ENCODE measurements at regions of chr12 and their contacts with region 1.

Region 1: GRCh38 chr12:93894391-93895088 is 217.4 kb downstream of the CRADD start:
- DNase-seq: no peak
- H3K4me3 Mint-ChIP-seq: no peak overlapping the region
- H3K27ac Mint-ChIP-seq: no peak overlapping the region
- H3K4me1 Mint-ChIP-seq: peaks cover 34% of the 10 kb centered on the region
- H3K27me3 Mint-ChIP-seq: peaks cover 1% of the 10 kb centered on the region

Region 2: DNA sequence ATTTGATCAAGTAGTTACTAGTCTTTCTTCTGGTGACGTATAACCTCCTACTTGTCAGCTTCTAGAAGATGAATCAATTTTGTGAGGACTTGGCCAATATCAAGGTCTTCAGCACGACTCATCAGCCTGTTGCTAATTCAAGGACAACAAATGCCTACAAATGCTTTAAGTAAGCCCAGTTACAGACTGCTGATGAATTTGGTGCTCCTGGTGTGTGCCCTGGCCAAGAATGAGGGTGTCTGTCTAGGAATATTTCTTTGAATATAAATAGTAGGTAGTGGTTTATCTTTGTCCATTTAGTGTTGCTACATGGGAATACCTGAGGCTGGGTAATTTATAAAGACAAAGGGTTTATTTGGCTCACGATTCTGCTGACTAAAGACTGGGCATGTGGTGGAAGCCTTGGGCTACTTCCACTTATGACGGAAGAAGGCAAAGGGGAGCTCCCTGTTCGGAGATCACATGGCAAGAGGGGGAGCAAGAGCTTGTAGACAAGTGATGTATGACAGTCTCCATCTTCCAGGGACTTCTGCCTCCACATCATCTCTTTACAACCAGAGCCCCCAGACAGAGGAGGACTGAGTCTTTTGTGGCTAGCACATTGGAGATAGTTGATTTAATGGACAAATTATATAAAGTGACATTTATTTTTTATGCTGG is 37.1 kb before region 1 on chr12:
- intact Hi-C with region 1: loop called (anchors 5 kb)
- DNase-seq: no peak
- H3K4me3 Mint-ChIP-seq: no peak overlapping the region
- H3K27ac Mint-ChIP-seq: no peak overlapping the region
- H3K4me1 Mint-ChIP-seq: peaks cover 46% of the 10 kb centered on the region
- H3K27me3 Mint-ChIP-seq: no peaks in the 10 kb centered on the region

Region 3: GRCh38 chr12:93879476-93880421 is 14.8 kb before region 1 on chr12:
- intact Hi-C with region 1: loop called (anchors 2 kb)
- DNase-seq: no peak
- H3K4me3 Mint-ChIP-seq: no peak overlapping the region
- H3K27ac Mint-ChIP-seq: peak overlapping the region; percentile 78
- H3K4me1 Mint-ChIP-seq: peaks cover 24% of the 10 kb centered on the region
- H3K27me3 Mint-ChIP-seq: peaks cover 4% of the 10 kb centered on the region

Region 4: DNA sequence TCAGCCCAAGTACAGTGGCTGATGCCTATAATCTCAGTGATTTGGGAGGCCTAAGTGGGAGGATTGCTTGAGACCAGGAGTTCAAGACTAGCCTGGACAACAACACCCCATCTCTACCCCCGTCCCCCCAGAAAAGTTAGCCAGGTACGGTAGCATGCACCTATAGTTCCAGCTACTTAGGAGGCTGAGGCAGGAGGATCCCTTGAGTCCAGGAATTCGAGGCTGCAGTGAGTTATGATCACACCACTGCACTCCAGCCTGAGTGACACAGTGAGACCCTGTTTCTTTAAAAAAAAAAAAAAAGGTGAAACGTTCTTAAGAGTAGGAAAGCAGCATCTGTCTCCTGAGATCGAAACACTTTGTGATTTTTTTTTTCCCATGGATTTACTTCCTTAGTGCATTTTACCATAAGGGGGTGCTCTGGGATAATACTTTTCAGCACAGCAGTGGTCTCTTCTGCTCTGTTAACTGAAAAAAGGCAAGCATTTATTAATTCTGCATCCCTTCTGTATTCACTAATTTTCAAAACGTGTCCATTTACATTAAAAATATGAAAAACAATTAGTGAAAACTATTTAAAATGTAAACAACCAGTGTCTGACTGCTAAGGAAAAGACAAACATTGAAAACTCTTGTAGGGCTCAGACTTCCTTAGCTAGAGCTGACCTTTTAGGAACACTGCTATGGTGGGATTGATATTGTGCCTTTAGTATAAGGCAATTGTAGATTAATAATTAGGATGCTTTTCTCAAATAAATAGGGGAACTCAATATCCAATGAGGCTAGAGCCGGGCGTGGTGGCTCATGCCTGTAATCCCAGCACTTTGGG is 1687.9 kb after region 1 on chr12:
- intact Hi-C with region 1: no loop called
- DNase-seq: no peak
- H3K4me3 Mint-ChIP-seq: no peak overlapping the region
- H3K27ac Mint-ChIP-seq: no peak overlapping the region
- H3K4me1 Mint-ChIP-seq: no peaks in the 10 kb centered on the region
- H3K27me3 Mint-ChIP-seq: peaks cover 4% of the 10 kb centered on the region